ENCODE measurements at regions of chr7 and their contacts with region 1.

Region 1: DNA sequence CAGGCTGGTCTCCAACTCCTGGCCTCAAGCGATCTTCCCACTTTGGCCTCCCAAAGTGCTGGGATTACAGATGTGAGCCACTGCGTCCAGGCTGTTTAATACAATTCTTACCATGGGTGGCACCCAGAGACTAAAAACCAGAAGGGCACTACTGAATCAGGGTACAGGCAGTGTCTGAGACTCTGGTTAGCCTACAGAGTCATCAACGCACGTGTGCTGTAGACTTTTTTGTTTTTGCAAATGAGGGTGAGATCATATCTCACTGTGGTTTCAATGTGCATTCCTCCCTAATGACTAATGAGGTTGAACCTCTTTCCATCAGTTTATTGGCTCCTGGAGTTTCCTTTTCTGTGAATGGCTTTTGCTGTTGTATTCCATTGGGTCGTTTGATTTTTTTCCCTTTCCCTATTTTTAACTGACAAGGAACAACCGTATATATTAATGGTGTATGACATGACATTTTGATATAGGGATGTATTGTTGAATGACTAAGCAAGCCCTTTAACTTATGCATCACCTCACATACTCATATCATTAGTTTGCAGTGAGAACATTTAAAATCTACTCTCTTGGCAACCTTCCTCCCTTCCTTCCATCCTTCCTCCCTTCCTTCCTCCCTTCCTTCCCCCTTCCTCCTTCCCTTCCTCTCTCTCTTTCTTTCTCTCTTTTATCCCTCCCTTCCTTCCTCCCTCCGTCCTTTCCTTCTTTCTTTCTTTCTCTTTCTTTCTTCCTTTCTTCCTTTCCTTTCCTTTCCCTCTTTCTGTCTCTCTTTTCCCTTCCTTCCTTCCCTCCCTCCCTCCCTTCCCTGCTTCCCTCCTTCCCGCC is 9.3 kb upstream of the METTL27 start:
- DNase-seq: peak; percentile 97
- H3K4me3 ChIP-seq: no peak overlapping the region
- H3K27ac ChIP-seq: peak overlapping the region; percentile 93
- H3K4me1 ChIP-seq: peaks cover 16% of the 10 kb centered on the region
- H3K27me3 ChIP-seq: no peaks in the 10 kb centered on the region
- CTCF ChIP-seq: no peak
- POLR2A ChIP-seq: peak; percentile 39

Region 2: GRCh38 chr7:73774923-73775322 is 76.7 kb before region 1 on chr7:
- CTCF ChIA-PET with region 1: interaction called, 6 read pairs
- POLR2A ChIA-PET with region 1: no interaction called
- dilution Hi-C with region 1: no loop called
- intact Hi-C with region 1: loop called (anchors 1 kb)
- DNase-seq: no peak
- H3K4me3 ChIP-seq: no peak overlapping the region
- H3K27ac ChIP-seq: no peak overlapping the region
- H3K4me1 ChIP-seq: peaks cover 34% of the 10 kb centered on the region
- H3K27me3 ChIP-seq: peaks cover 2 to 5% of the 10 kb centered on the region in 2 experiments
- CTCF ChIP-seq: no peak
- POLR2A ChIP-seq: no peak

Region 3: DNA sequence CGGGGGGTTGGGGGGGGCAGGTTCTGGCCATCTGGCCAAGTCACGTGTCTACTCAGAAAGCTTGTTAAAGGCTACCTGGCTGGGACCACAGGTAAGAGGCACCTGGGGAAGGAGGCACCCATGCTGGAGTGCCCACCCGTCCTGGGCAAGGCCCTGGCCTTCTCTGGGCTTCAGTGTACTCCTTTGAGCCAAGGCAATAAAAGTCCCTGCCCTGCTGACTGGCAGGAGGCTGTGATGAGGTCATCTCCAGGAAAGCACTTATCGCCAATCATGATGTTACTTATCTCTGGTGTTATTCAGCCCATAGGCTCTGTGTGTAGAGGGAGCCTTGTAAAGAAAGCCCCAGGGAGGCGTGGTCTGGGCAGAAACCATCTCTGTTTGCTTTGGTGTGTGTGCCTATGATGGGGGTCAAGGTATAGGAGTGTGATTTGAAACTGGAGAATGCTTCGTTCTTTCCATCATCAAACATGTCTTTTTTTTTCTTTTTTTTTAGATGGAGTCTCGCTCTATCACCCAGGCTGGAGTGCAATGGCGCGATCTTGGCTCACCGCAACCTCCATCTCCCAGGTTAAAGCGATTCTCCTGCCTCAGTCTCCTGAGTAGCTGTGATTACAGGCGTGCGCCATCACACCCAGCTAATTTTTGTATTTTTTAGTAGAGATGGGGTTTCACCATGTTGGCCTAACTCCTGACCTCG is 23.4 kb before region 1 on chr7:
- CTCF ChIA-PET with region 1: interaction called, 16 read pairs
- POLR2A ChIA-PET with region 1: interaction called, 3 read pairs
- dilution Hi-C with region 1: no loop called
- intact Hi-C with region 1: no loop called
- DNase-seq: peak; percentile 69
- H3K4me3 ChIP-seq: no peak overlapping the region
- H3K27ac ChIP-seq: no peak overlapping the region
- H3K4me1 ChIP-seq: peaks cover 5% of the 10 kb centered on the region
- H3K27me3 ChIP-seq: no peaks in the 10 kb centered on the region
- CTCF ChIP-seq: no peak
- POLR2A ChIP-seq: no peak

Region 4: DNA sequence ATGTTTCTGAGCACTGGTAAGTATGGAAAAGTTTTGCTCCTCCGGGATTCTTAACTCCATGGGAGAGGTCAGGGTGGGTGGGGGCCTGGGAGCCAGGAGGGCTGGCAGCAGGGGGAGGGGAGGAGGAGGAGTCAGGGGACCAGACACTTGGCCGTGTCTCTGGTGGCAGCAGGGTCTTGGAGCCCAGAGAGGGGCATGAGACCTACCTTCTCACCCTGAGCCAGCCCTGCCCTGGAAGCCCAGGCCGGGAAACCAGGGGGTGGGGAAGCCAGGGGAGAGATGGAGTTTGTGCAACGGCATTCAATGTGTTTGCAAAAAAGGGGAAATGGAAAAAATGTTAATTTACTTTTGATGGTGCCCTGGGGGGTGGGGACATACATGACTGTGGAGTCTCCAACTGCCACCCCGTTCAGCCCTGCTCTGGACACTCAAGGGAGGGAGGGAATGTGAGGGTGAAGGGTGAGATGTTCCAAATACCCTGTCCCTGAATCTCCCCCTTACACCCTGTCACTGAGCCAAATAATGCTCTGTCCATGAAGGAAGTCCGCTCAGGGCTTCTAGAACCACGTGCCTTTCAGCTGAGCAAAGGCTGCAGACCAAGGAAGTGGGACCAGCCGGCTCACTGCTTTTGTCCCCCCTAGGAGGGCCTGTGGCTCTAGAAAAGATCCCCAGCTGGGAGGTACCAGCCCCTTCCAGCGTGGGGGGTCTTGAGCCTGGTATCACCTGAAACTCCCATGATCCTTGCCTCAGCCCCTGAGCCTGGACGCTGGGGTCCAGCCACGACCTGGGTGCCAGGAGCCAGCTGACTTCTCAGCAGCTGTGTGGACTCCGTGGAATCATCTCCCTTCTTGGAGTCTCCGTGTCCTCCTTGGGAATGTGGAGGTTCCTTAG is 57.7 kb after region 1 on chr7:
- CTCF ChIA-PET with region 1: no interaction called
- POLR2A ChIA-PET with region 1: no interaction called
- dilution Hi-C with region 1: no loop called
- intact Hi-C with region 1: no loop called
- DNase-seq: no peak
- H3K4me3 ChIP-seq: no peak overlapping the region
- H3K27ac ChIP-seq: no peak overlapping the region
- H3K4me1 ChIP-seq: no peaks in the 10 kb centered on the region
- H3K27me3 ChIP-seq: peaks cover 0 to under 1% of the 10 kb centered on the region in 2 experiments
- CTCF ChIP-seq: no peak
- POLR2A ChIP-seq: no peak

Region 5: GRCh38 chr7:74000489-74001149 is 149.0 kb after region 1 on chr7:
- CTCF ChIA-PET with region 1: no interaction called
- POLR2A ChIA-PET with region 1: no interaction called
- dilution Hi-C with region 1: no loop called
- intact Hi-C with region 1: no loop called
- DNase-seq: no peak
- H3K4me3 ChIP-seq: no peak overlapping the region
- H3K27ac ChIP-seq: no peak overlapping the region
- H3K4me1 ChIP-seq: peaks cover 19% of the 10 kb centered on the region
- H3K27me3 ChIP-seq: no peaks in the 10 kb centered on the region
- CTCF ChIP-seq: no peak
- POLR2A ChIP-seq: no peak

Region 6: DNA sequence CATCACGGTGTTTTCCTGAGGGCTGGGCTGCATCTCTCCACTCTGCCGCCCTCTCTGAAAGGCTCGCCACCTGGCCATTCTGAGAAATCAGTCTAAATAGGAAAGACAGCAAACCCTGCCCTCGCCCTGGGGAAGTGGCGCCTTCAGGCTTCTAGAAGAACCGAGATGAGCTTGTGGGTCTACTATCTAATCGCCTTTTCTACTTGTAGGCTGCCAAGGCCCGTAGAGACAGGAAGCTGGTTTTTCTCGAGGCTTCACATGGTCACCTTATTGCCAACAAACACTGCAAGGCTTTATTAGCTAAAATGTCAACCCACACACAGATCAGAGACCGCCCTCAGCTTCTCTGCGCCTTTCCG is 379.6 kb after region 1 on chr7:
- CTCF ChIA-PET with region 1: no interaction called
- POLR2A ChIA-PET with region 1: no interaction called
- dilution Hi-C with region 1: no loop called
- intact Hi-C with region 1: no loop called
- DNase-seq: no peak
- H3K4me3 ChIP-seq: no peak overlapping the region
- H3K27ac ChIP-seq: no peak overlapping the region
- H3K4me1 ChIP-seq: no peaks in the 10 kb centered on the region
- H3K27me3 ChIP-seq: no peaks in the 10 kb centered on the region
- CTCF ChIP-seq: no peak
- POLR2A ChIP-seq: no peak

Measured in endothelial cell of umbilical vein (primary cell).